AG04450 (cell line): ENCODE measurements at regions of chr16 and their contacts with region 1.

Region 1: GRCh38 chr16:9134739-9135138 is 43.3 kb downstream of the HAPSTR1 start:
- DNase-seq: no peak
- H3K4me3 ChIP-seq: no peak overlapping the region
- H3K27ac ChIP-seq: no peak overlapping the region
- H3K27me3 ChIP-seq: no peaks in the 10 kb centered on the region
- CTCF ChIP-seq: peak; percentile 63

Region 2: GRCh38 chr16:9061358-9061813 is 73.4 kb before region 1 on chr16:
- CTCF ChIA-PET with region 1: no interaction called
- POLR2A ChIA-PET with region 1: no interaction called
- DNase-seq: peak; percentile 74
- H3K4me3 ChIP-seq: no peak overlapping the region
- H3K27ac ChIP-seq: peak overlapping the region; percentile 52
- H3K27me3 ChIP-seq: no peaks in the 10 kb centered on the region
- CTCF ChIP-seq: no peak

Region 3: DNA sequence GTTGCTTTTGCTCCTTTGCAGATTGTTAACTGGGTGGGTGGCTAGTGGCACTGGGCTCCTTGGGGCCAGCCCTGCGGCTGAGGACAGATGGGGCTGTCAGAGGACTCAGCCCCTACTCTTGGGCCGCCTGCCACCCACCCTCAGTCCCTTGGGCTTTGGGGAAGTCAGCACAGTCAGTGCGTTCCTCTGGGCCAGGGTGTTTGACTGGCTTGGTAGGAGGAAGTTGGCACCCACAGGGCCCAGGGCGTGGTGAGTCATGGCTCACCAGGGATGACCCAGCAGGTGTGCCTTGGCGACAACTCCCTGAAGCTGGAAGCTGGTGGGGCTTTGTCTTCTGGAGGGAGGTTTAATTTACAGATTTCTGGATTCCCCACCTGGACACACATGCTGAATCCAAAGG is 10.9 kb before region 1 on chr16:
- CTCF ChIA-PET with region 1: interaction called, 31 read pairs
- POLR2A ChIA-PET with region 1: no interaction called
- DNase-seq: no peak
- H3K4me3 ChIP-seq: no peak overlapping the region
- H3K27ac ChIP-seq: peak overlapping the region; percentile 11
- H3K27me3 ChIP-seq: no peaks in the 10 kb centered on the region
- CTCF ChIP-seq: no peak

Region 4: GRCh38 chr16:9151597-9151996 is 16.9 kb after region 1 on chr16:
- CTCF ChIA-PET with region 1: interaction called, 29 read pairs
- POLR2A ChIA-PET with region 1: interaction called, 5 read pairs
- DNase-seq: peak; percentile 68
- H3K4me3 ChIP-seq: no peak overlapping the region
- H3K27ac ChIP-seq: peak overlapping the region; percentile 70
- H3K27me3 ChIP-seq: no peaks in the 10 kb centered on the region
- CTCF ChIP-seq: no peak